OCI-LY7 (cell line): ENCODE measurements at regions of chr12 and their contacts with region 1.

Region 1: GRCh38 chr12:56541631-56542030 is 20.0 kb downstream of the RBMS2 start:
- DNase-seq: no peak
- H3K4me3 ChIP-seq: no peak overlapping the region
- H3K27ac ChIP-seq: no peak overlapping the region
- H3K4me1 ChIP-seq: no peaks in the 10 kb centered on the region
- CTCF ChIP-seq: no peak

Region 2: DNA sequence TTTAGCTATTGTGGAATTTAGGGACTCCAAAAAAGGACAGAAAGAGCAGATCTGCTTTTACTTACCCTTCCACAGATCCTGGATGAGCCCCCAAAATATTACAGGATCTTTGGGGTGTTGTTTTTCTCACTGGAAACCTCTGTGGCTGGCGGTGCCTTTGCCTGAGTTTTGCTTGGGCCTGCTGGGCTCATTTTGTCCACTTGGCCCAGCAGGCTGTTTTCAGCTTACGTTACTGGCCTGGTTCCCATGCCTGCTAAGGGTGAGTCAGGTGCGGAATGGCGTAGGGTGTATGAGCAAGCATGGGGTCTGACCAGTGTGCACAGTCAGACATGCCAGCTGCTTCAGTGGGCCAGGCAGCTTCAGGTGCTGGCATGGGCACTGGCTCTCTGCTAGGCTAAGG is 267.3 kb after region 1 on chr12:
- CTCF ChIA-PET with region 1: no interaction called
- POLR2A ChIA-PET with region 1: no interaction called
- intact Hi-C with region 1: loop called (anchors 5 kb)
- DNase-seq: peak; percentile 9
- H3K4me3 ChIP-seq: no peak overlapping the region
- H3K27ac ChIP-seq: no peak overlapping the region
- H3K4me1 ChIP-seq: no peaks in the 10 kb centered on the region
- CTCF ChIP-seq: no peak